HAP-1 (cell line): ENCODE measurements at regions of chr20 and their contacts with region 1.

Region 1: GRCh38 chr20:34876162-34877001 is at the start of gene ACSS2:
- DNase-seq: peak; percentile 98 to 100
- H3K4me3 ChIP-seq: peak within 1 kb of the TSS; percentile 69
- H3K4me1 ChIP-seq: peaks cover 23% of the 10 kb centered on the region
- H3K27me3 ChIP-seq: no peaks in the 10 kb centered on the region

Region 2: DNA sequence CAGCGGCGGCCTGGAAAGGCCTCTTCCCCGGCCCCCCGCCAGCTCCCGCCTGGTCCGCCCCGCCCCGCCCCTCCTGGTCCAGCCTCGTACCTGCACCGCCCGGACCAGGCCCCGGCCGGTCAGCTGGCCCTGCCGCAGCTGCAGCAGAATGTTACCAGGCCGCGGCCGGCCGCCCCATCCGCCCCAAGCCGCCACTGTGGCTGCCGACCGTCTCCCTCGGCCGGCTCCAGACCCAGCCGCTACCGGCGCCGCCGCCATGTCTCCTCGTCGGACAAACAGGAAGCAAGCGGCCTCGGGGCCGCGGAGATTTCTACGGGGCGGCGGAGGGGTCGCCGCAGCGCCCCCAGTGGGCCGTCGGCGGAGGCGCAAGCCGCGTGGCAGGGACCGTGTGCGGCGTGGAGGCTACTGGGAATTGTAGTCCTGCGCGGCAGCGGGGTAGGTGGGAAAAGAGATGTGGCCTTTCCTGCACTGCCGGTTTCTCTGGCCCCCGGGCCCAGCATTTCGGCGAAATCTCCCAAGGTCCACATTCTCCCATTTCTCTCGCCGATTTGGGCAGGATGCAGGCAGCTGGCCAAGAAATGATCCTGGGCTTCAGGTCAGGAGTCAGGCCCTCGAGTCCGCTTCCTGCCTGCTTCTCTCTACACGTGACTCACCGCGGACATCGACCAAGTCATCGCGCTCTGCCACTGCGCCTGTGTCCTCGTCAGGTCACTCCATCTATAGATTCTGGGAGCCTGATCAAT is 216.3 kb after region 1 on chr20 and contains the start of gene TRPC4AP:
- in situ Hi-C with region 1: loop called (anchors 10 kb)
- DNase-seq: peak; percentile 90
- H3K4me3 ChIP-seq: peak within 1 kb of the TSS; percentile 74
- H3K4me1 ChIP-seq: peaks cover 27% of the 10 kb centered on the region
- H3K27me3 ChIP-seq: no peaks in the 10 kb centered on the region